Activated CD4-positive, alpha-beta memory T cell treated with anti-CD3 and anti-CD28 coated beads for 36 hours (primary cell): ENCODE measurements at regions of chr1 and their contacts with region 1.

Region 1: GRCh38 chr1:175154629-175155472 is 37.7 kb downstream of the KIAA0040 start:
- DNase-seq: peak; percentile 82
- H3K4me3 Mint-ChIP-seq: no peak overlapping the region
- H3K27ac Mint-ChIP-seq: no peak overlapping the region
- H3K4me1 Mint-ChIP-seq: peaks cover 20% of the 10 kb centered on the region
- H3K27me3 Mint-ChIP-seq: peaks cover 22% of the 10 kb centered on the region

Region 2: DNA sequence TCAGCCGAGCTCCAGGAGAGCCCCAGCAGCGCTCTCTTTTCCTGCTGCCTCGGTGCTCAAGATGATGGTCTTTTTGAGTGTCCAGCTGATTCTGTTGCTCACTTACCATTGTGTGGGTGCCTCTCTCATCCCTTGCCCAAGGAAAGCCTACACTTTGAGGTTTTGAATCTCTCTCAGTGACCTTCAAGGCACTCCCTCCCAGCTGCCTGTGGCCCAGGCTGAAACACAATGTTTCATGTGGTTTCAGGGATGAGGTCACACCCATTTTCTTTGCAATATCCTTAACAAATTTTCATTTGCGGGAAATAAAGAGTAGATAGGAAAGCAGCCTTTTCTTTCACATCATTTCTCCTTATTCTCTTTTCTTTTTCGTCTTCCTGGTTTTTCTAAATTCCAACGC is 119.0 kb before region 1 on chr1:
- CTCF ChIA-PET with region 1: interaction called, 17 read pairs
- POLR2A ChIA-PET with region 1: no interaction called
- intact Hi-C with region 1: no loop called
- DNase-seq: no peak
- H3K4me3 Mint-ChIP-seq: no peak overlapping the region
- H3K27ac Mint-ChIP-seq: no peak overlapping the region
- H3K4me1 Mint-ChIP-seq: no peaks in the 10 kb centered on the region
- H3K27me3 Mint-ChIP-seq: no peaks in the 10 kb centered on the region

Region 3: DNA sequence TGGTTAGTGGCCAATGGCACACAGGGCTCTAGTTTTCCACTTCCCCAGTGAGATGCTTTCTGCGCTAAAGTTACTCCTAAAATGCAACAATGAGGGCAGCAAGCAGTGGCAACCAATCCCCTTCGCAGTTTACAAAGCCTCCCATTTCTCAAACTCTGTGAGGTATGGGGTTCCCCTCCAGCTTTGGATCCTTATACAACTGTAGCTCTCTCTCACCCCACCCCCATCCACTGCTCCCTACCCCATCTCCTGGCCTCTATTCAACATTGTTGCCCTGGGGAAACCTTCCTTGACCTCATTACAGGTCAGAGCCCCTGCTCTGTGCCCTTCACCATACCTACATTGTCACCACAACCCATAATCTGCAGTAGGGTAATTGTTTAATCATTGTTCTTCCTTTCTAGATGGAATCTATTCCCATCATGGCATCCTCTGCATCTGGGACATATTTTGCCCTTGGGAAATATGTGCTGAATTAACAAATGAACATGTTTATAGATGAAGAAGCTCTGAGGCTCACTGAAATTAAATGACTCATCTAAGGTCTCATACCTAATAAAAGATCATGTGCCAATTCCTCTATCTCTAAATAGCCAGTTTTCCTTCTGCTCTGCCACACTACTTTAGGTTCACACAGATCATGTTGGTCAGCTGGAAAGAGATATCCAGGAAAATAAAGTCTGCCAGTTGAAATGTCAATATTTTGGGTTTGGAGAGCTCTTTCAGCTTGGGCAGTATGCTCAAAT is 25.2 kb after region 1 on chr1:
- CTCF ChIA-PET with region 1: interaction called, 13 read pairs
- POLR2A ChIA-PET with region 1: no interaction called
- intact Hi-C with region 1: no loop called
- DNase-seq: no peak
- H3K4me3 Mint-ChIP-seq: no peak overlapping the region
- H3K27ac Mint-ChIP-seq: no peak overlapping the region
- H3K4me1 Mint-ChIP-seq: peaks cover 63% of the 10 kb centered on the region
- H3K27me3 Mint-ChIP-seq: no peaks in the 10 kb centered on the region

Region 4: DNA sequence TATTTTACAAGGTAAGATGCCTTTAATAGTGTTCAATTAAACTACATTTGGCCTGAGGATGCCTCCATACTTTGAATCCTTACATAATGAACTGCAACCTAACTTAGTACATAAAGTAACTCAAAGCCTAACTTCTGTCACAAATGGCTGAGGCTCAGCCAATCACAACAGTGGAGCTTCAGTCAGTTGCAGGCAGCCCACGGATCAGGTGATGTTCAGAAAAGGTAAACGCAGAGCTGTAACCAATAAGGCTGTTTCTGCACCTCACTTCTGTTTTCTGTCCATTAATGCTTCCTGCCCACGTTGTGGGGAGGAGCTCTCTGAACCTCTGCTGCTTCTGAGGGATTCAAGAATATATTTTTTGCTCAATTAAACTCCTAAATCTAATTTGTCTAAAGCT is 132.5 kb after region 1 on chr1:
- CTCF ChIA-PET with region 1: interaction called, 13 read pairs
- POLR2A ChIA-PET with region 1: no interaction called
- intact Hi-C with region 1: no loop called
- DNase-seq: peak; percentile 37
- H3K4me3 Mint-ChIP-seq: no peak overlapping the region
- H3K27ac Mint-ChIP-seq: no peak overlapping the region
- H3K4me1 Mint-ChIP-seq: peaks cover 13% of the 10 kb centered on the region
- H3K27me3 Mint-ChIP-seq: no peaks in the 10 kb centered on the region

Region 5: DNA sequence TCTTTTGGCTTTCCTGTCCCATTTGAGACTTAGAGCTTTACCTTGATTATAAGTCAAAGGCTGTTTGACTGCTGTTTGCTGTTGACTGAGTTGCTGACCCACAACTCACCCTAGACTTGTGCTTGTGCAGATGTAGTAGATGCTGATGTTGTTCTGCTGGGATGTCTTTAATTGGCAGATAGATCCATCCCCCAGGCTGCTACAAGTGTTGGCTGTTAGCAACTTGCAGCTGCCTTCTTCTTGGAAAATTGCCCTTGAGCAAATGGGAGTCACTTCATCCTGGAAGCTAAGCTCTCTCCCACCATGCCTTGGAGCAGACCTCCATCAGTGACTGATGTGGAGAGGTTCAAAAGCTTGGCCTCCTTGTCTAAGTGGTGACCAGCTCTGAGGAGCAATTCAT is 177.0 kb after region 1 on chr1:
- CTCF ChIA-PET with region 1: interaction called, 60 read pairs
- POLR2A ChIA-PET with region 1: no interaction called
- intact Hi-C with region 1: no loop called
- DNase-seq: no peak
- H3K4me3 Mint-ChIP-seq: no peak overlapping the region
- H3K27ac Mint-ChIP-seq: no peak overlapping the region
- H3K4me1 Mint-ChIP-seq: no peaks in the 10 kb centered on the region
- H3K27me3 Mint-ChIP-seq: no peaks in the 10 kb centered on the region

Region 6: DNA sequence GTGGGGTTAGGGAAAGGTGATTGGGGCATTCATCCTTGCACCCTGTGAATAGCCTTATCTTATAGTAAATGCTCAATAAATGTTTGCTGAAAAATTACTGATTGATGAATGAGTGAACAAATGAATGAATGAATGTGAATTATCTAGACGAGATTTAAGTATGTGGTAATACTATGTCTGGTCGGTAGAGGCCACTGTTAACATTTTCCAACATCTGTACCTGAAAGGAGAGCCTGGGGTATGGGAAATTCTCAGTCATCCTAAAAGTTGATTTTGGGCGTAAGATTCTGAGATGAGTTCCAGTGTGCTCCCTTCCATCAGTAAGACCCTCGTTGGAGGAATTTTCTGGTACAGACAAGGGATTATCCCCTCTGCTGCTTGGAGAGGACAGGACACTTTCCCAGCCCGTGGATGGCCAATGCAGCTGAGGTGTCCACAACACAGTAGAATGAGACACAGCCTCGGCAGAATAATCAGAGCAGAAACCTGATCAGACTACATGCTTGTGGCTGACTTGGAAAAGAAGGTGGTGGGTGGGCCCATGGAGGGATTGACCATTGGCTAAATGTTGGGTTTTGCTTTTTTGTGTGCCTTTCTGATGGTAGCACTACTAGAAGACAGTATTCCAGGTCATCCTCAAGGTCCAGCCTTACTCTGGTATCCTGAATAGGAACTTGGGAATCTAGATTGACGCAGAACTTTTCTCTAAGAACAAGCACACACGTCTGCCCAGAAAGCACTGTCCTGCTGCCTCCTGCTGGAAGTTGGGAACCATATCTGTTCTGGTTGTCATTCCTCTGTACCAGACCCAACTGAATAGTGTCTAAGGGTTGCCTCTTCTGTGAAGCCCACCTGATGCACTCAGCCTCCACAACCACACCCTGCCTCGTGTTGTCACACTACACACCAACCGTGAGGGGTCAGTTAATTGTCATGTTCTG is 326.5 kb after region 1 on chr1:
- CTCF ChIA-PET with region 1: interaction called, 3 read pairs
- POLR2A ChIA-PET with region 1: no interaction called
- intact Hi-C with region 1: loop called (anchors 5 kb)
- DNase-seq: no peak
- H3K4me3 Mint-ChIP-seq: no peak overlapping the region
- H3K27ac Mint-ChIP-seq: no peak overlapping the region
- H3K4me1 Mint-ChIP-seq: no peaks in the 10 kb centered on the region
- H3K27me3 Mint-ChIP-seq: peaks cover 18% of the 10 kb centered on the region